Activated T-helper 2 cell treated with anti-CD3 and anti-CD28 coated beads, Interferon-gamma antibody, Interleukin-2, Interleukin-4, amounts not matched to agents 10 μg/mL and 5 μg/mL and 100 μg/mL, durations not matched to agents 14 hours and 24 hours and 36 hours (primary cell): ENCODE measurements at regions of chr1 and their contacts with region 1.

Region 1: GRCh38 chr1:177219554-177220513 is 49.1 kb downstream of the BRINP2 start:
- DNase-seq: no peak
- H3K4me3 Mint-ChIP-seq: no peak overlapping the region
- H3K27ac Mint-ChIP-seq: no peak overlapping the region
- H3K4me1 Mint-ChIP-seq: no peaks in the 10 kb centered on the region
- H3K27me3 Mint-ChIP-seq: no peaks in the 10 kb centered on the region

Region 2: DNA sequence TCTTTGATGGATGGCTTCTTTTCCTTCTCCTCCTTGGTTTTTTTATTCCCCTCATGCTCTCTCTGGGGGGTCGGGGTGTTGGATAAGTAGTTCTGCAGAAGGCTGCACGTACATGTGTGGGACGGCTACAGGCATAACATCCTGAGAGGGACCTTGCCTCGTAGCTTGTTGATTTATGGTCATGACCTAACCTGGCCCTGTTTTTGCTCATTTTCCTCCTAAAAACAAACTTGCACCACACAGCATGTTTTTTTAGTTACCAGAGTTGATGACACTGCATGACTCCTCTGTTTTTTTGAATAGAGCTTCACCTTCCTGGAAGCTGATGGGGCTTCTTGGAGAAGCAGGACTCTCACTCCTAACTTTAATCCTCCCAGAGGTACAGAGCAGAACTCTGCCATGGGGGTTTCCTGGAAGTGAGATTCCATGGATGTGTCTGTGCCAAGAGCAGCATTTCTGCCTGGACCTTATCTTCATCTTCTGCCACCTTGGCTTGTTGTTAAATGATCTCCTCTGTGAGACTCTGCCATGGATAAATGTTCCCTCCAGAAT is 642.1 kb before region 1 on chr1:
- intact Hi-C with region 1: loop called (anchors 10 kb)
- DNase-seq: no peak
- H3K4me3 Mint-ChIP-seq: no peak overlapping the region
- H3K27ac Mint-ChIP-seq: no peak overlapping the region
- H3K4me1 Mint-ChIP-seq: no peaks in the 10 kb centered on the region
- H3K27me3 Mint-ChIP-seq: no peaks in the 10 kb centered on the region

Region 3: DNA sequence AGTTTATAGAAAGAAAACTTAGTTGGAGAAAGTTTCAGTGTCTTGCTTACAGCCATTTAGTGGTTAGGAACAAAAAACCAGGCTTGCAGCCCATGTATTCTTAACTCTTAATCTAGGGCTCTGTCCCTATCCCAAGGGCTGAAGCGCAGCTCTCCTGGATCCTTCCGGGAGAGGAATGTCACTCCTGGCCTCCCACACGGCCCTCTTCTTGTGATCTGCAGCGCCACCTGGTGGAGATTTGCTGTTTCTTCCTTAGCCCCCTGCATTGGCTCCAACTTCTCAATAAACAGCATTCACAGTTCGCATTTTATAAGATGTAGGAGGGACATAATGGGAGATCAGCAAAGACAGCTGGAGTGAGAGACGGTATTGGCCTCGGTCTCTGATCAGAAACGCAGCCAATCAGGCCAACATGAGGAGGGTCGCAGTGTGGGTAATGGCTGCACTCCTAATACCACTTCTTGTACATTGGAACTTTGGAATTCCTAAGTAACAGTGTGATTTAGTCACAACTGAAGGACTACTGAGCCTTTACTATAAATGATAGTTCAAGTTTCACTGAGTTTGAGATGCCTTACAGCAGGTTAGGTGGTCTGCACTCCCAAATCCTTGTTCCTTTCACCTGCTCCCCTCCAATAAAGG is 338.8 kb before region 1 on chr1:
- intact Hi-C with region 1: no loop called
- DNase-seq: peak; percentile 19
- H3K4me3 Mint-ChIP-seq: no peak overlapping the region
- H3K27ac Mint-ChIP-seq: no peak overlapping the region
- H3K4me1 Mint-ChIP-seq: no peaks in the 10 kb centered on the region
- H3K27me3 Mint-ChIP-seq: no peaks in the 10 kb centered on the region